Sigmoid colon (tissue), 7 donors: ENCODE measurements at regions of chr12 and their contacts with region 1.

Region 1: GRCh38 chr12:88579161-88579517 is 1.1 kb downstream of the KITLG start:
- DNase-seq: no peak
- H3K4me3 ChIP-seq: peak overlapping the region; percentile 60 to 81 (median 66)
- H3K27ac ChIP-seq: peak overlapping the region; percentile 77 to 86 (median 85)
- H3K4me1 ChIP-seq: peaks cover 0 to 44% (median 34%) of the 10 kb centered on the region in 4 donors
- H3K27me3 ChIP-seq: no peaks in the 10 kb centered on the region
- CTCF ChIP-seq: peak; percentile 23 to 66 (median 60)
- EP300 ChIP-seq: no peak
- POLR2A ChIP-seq: no peak

Region 2: DNA sequence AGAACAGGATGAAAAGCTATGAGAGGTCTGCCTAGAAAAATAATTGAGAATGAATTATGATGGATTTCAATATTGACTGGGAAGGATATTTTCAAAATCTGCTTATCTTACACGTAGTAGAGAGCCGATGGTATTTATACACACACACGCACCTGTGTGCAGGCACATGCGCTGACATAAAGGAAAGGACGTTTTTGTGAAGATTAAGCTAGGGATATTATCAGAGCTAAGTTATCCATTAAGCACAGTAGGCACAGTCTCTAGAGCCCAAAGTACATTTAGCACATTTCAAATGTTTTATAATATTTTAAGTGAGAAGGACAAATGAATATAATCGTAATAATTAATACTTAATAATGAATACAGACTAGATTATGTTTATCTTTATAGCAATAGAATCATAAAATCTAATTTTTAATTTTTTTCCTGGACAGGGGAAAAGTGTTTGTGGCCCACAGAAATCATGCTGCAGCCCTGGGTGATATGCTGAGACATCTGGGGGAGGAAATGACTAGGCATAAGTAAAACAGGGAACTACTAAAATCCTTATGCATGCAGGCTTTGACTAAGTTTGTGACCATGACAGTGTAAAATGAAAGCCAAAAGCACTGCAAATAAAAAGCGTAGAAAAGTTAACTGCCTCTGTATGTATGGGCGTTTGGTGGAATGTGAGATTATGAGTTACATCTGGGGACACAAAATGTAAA is 145.0 kb before region 1 on chr12:
- intact Hi-C with region 1: loop called (anchors 10 kb)
- DNase-seq: no peak
- H3K4me3 ChIP-seq: no peak overlapping the region
- H3K27ac ChIP-seq: peak overlapping the region in 1 of 4 donors; percentile 4
- H3K4me1 ChIP-seq: peaks cover 0 to 38% (median 17%) of the 10 kb centered on the region in 4 donors
- H3K27me3 ChIP-seq: no peaks in the 10 kb centered on the region
- CTCF ChIP-seq: no peak
- EP300 ChIP-seq: no peak
- POLR2A ChIP-seq: no peak

Region 3: GRCh38 chr12:89470741-89471509 is 891.8 kb after region 1 on chr12:
- intact Hi-C with region 1: no loop called
- DNase-seq: no peak
- H3K4me3 ChIP-seq: no peak overlapping the region
- H3K27ac ChIP-seq: no peak overlapping the region
- H3K4me1 ChIP-seq: no peaks in the 10 kb centered on the region
- H3K27me3 ChIP-seq: no peaks in the 10 kb centered on the region
- CTCF ChIP-seq: peak in 3 of 4 experiments; percentile 16 to 47 (median 34)
- EP300 ChIP-seq: no peak
- POLR2A ChIP-seq: no peak